ENCODE measurements at regions of chr19 and their contacts with region 1.

Region 1: DNA sequence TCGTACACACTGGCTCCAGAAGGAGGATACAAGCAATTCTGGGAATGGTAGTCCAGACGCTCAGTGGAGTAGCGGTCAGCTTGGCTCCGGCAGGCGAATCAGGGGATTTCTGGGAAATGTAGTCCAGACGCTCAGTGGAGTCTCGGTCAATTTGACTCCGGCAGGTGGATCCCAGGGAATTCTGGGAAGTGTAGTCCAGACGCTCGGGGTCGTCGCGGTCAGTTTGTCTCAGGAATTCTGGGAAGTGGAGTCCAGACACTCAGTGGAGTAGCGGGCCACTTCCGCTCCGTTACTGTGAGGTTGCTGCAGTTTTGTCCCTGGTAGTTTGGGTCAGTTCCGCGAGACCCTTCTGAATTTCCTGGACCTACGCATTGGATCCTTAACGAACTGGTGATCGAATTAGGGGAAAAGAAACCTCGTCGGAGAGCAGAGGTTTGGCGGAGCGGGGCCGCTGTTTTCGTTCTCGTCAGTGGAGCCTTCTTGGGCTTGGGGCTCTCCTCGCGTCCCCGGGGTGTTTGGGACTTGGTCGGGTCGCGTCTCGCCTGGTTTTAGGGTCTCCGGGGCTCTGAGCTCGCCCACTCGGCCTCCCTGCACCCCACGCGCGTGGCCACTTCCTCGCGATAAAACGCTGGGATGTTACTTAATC is at the start of gene ZNF225:
- DNase-seq: peak; percentile 93
- H3K4me3 Mint-ChIP-seq: peak within 1 kb of the TSS; percentile 95
- H3K27ac Mint-ChIP-seq: peak within 1 kb of the TSS; percentile 78
- H3K4me1 Mint-ChIP-seq: peaks cover 16% of the 10 kb centered on the region
- H3K27me3 Mint-ChIP-seq: no peaks in the 10 kb centered on the region
- total RNA-seq, gene ZNF225: 2.1 to 2.2 TPM

Region 2: DNA sequence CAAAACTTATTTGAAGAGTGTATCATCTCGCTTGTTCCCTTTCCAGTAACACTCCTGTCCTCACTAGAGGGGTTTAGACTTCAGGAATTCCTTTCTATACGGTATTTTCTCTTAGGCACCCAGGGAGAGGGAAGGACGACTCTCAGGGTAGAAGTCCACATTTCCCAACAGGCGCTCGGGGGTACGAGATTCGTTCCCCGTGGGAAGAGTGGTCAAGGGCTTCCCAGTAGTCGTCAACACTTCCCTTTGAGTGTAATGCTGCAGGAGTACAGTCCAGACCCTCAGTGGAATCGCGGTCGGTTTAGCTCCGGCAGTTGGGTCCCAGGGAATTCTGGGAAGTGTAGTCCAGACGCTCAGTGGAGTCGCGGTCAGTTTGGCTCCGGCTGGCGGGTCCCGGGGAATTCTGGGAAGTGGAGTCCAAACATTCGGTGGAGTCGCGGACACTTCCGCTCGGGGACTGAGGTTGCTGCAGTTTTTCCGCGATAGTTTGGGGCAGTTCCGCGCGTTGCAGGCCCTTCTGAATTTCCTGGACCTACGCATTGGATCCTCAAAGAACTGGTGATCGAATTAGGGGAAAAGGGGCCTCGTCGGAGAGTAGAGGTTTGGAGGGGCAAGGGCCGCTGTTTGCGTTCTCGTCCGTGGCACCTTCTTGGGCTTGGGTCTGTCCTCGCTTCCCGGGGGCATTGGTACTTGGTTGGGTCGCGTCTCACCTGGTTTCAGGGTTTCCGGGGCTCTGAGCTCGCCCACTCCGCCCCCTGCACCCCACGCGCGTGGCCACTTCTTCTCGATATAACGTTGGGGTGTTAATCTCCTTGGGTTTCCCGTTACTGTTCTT is 19.1 kb before region 1 on chr19 and contains the start of gene ZNF224:
- CTCF ChIA-PET with region 1: no interaction called
- intact Hi-C with region 1: loop called (anchors 1 kb)
- DNase-seq: peak; percentile 91
- H3K4me3 Mint-ChIP-seq: peak within 1 kb of the TSS; percentile 98
- H3K27ac Mint-ChIP-seq: peak within 1 kb of the TSS; percentile 87
- H3K4me1 Mint-ChIP-seq: peaks cover 13% of the 10 kb centered on the region
- H3K27me3 Mint-ChIP-seq: no peaks in the 10 kb centered on the region
- total RNA-seq, gene ZNF224: 8.7 to 10.9 TPM

Region 3: GRCh38 chr19:44164673-44165512 is 51.6 kb after region 1 on chr19 and contains the start of gene ZNF226:
- CTCF ChIA-PET with region 1: interaction called, 3 read pairs
- intact Hi-C with region 1: loop called (anchors 1 kb)
- DNase-seq: peak; percentile 90
- H3K4me3 Mint-ChIP-seq: peak within 1 kb of the TSS; percentile 94
- H3K27ac Mint-ChIP-seq: peak within 1 kb of the TSS; percentile 93
- H3K4me1 Mint-ChIP-seq: peaks cover 27% of the 10 kb centered on the region
- H3K27me3 Mint-ChIP-seq: no peaks in the 10 kb centered on the region
- total RNA-seq, gene ZNF226: 12.4 to 16.9 TPM

Region 4: DNA sequence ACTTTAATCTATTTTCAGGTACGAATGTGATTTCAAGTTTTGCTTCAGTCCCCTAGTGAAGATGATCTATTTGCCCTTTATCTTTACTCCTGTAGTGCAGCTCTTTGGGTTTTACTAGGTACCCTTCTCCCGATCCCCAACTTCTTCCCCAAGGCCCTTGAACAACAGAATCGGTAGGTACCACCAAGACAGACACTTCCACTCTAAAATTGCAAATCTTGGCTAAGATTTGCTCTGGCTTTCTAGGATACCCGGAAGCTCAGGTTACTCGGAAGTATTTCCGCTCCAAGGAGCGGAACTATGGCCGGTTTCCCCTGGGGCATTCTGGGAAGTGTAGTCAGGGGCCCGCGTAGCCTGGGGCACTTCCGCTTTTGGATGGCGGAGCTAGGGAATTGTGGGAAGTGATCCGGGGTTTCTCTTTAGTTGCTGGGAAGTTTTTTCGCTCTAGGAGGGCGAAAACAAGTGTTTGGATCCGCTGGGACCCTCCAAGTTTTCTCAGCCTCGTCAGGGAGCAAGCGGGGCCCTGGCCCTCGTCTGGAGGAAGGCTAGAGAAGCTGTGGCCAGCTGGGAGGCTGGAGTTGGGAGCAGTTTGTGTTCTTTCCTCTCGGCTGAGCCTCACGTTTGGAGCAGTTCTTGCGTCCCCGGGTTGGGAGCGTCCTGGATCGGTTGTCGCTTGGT is 94.0 kb after region 1 on chr19:
- CTCF ChIA-PET with region 1: no interaction called
- intact Hi-C with region 1: loop called (anchors 1 kb)
- DNase-seq: peak; percentile 87
- H3K4me3 Mint-ChIP-seq: peak overlapping the region; percentile 80
- H3K27ac Mint-ChIP-seq: peak overlapping the region; percentile 63
- H3K4me1 Mint-ChIP-seq: peaks cover 5% of the 10 kb centered on the region
- H3K27me3 Mint-ChIP-seq: peaks cover 3% of the 10 kb centered on the region

Region 5: DNA sequence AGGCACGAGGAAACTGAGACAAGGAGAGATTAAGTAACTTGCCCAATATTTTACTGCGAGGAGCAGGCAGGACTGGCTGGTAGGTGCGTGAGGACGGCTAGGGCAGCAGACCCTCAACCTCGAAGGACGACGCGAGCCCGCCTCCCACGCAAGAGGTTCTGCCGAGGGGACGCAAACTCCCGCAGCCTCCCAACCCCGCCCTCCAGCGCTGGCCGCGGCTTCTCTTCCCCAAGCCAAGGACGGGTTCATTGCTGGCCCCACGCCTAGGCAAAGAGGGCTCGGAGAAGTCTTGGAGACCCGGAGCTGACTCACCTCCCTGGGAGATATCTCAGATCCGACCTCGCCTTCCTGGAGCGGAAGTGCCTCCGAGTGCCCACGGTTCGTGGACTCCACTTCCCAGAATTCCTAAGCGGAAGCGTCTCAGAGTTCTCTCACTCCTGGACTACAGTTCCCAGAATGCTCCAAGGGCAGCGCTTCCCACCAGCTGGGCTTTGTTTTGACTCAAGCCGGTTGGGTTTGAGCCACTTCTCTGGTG is 191.5 kb after region 1 on chr19 and contains the start of gene ZNF235:
- CTCF ChIA-PET with region 1: no interaction called
- intact Hi-C with region 1: loop called (anchors 1 kb)
- DNase-seq: peak; percentile 87
- H3K4me3 Mint-ChIP-seq: peak within 1 kb of the TSS; percentile 77
- H3K27ac Mint-ChIP-seq: peak within 1 kb of the TSS; percentile 16
- H3K4me1 Mint-ChIP-seq: peaks cover 9% of the 10 kb centered on the region
- H3K27me3 Mint-ChIP-seq: no peaks in the 10 kb centered on the region
- total RNA-seq, gene ZNF235: 1.5 to 1.6 TPM

Region 6: DNA sequence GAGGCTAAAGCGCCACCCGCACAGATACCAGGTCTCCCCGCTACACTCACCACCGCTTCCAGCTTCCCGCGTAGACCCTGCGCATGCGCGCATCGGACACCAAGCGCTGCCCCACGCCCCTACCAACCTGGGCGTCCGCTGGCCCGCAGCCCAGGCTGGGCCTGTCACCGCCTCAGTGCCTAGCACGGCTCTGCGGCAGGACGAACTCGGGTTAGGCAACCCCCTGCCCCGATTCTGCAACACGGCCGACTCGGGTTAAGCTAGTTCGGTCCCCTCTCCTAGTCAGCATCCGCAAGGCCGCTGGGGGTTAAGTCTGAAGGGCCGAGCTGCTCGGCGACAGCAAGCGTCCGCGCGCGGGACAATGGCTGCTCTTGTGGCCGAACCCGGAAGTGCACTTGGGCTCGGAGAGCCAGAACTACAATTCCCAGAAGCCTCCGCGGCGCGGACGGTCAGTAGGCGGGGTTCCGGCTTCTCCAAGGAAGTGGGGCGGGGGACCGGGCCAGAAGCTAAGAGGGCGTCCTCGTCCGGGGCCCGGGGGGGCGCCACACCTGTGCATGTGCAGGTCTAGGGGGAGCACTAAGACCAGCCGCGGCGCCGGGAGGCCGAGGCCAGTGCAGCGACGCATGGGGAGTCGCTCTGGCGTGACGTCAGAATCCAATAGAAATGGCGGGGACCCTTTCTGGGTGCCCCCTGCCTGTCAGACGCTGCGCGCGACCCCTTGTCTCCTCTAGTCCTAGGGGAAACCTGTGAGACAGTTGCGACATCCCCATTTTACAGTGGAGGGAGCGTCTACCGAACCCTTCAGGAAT is 387.1 kb after region 1 on chr19 and contains the start of gene ZNF180:
- CTCF ChIA-PET with region 1: no interaction called
- intact Hi-C with region 1: loop called (anchors 5 kb)
- DNase-seq: peak; percentile 96
- H3K4me3 Mint-ChIP-seq: peak within 1 kb of the TSS; percentile 86
- H3K27ac Mint-ChIP-seq: peak within 1 kb of the TSS; percentile 83
- H3K4me1 Mint-ChIP-seq: peaks cover 30% of the 10 kb centered on the region
- H3K27me3 Mint-ChIP-seq: peaks cover 4% of the 10 kb centered on the region
- total RNA-seq, gene ZNF180: 3.3 to 5.2 TPM

Measured in activated naive CD4-positive, alpha-beta T cell treated with anti-CD3 and anti-CD28 coated beads for 36 hours (primary cell).